HEK293T (cell line): ENCODE measurements at regions of chr13 and their contacts with region 1.

Region 1: GRCh38 chr13:27953676-27954405 is 15.3 kb downstream of the CDX2 start:
- DNase-seq: peak; percentile 87

Region 2: GRCh38 chr13:27868641-27869435 is 85.0 kb before region 1 on chr13:
- CTCF ChIA-PET with region 1: interaction called, 15 read pairs
- POLR2A ChIA-PET with region 1: interaction called, 5 read pairs
- DNase-seq: no peak

Region 3: DNA sequence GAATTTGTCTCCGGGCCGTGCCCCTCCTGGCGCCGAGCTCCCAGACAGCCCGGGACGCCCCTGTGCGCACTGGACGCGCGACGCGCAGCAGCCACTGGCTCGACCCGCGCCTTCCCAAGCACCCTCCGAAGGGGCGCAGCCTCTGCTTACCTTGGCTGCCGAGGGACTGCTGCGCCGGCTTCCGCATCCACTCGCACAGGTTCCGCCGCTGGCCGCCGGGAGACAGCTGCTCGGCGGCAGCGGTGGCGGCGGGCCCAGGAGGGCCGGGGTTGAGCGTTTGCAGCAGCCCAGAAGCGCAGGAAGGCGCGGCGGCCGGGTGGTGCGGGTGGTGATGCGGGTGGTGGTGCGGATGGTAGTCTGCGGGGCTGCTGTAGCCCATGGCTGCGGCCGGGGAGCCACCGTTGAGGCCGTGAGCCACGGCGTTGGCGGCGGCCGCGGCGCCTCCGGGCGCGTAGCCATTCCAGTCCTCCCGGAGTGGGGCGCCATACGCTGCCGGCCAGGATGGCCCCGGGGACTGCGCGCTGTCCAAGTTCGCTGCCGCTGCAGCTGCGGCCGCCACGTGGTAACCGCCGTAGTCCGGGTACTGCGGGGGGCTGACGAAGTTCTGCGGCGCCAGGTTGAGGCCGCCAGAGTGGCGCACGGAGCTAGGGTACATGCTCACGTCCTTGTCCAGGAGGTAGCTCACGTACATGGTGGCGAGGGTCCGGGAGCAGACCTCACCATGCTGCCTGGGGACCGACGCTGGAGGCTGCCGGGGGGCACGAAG is 14.7 kb after region 1 on chr13:
- CTCF ChIA-PET with region 1: interaction called, 7 read pairs
- POLR2A ChIA-PET with region 1: interaction called, 10 read pairs
- DNase-seq: peak; percentile 27

Region 4: GRCh38 chr13:27991881-27992550 is 38.2 kb after region 1 on chr13:
- CTCF ChIA-PET with region 1: no interaction called
- POLR2A ChIA-PET with region 1: no interaction called
- DNase-seq: no peak

Region 5: DNA sequence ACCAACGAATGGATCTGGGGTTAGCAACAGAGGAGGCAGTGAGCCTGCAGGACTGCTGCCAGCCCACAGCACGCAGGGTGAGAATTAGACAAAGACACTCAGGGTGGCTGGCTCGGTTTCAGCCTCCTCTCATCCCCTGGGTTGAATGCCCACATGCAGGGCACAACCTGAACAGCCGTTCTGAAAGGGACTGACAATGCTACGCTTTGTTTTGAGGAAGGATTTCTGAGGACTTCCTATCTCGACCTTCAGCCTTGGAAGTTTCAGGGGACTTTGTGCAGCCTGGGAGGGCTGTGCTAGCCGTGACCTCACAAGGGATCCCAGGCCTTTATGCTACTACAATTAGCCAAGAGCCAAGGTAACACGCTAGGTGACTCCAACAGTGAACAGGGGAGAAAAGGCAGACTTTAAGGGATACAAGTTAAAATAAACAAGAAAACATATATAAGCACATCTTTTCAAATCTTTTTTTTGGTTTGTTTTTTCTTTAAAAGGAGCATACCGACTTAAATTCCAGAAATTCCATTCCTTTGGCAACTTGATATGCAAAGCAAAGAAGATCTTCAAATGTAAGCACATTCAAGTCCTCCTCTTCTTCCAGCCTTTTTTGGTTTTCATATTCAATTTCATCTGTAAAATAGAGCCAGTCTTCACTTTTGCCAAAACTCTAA is 69.1 kb after region 1 on chr13:
- CTCF ChIA-PET with region 1: no interaction called
- POLR2A ChIA-PET with region 1: no interaction called
- DNase-seq: no peak